ENCODE measurements at regions of chr15 and their contacts with region 1.

Region 1: GRCh38 chr15:73927476-73928240 is 1.4 kb downstream of the LOXL1 start:
- DNase-seq: peak; percentile 61 to 84 (median 75)
- H3K4me3 ChIP-seq: peak overlapping the region; percentile 49
- H3K4me3 Mint-ChIP-seq: peak overlapping the region; percentile 75 to 93 (median 81)
- H3K27ac ChIP-seq: no peak overlapping the region
- H3K27ac Mint-ChIP-seq: peak overlapping the region; percentile 22 to 92 (median 51)
- H3K4me1 ChIP-seq: peaks cover 21% of the 10 kb centered on the region
- H3K4me1 Mint-ChIP-seq: peaks cover 32 to 52% (median 43%) of the 10 kb centered on the region in 3 donors
- H3K27me3 ChIP-seq: no peaks in the 10 kb centered on the region
- H3K27me3 Mint-ChIP-seq: no peaks in the 10 kb centered on the region

Region 2: GRCh38 chr15:73915079-73915478 is 12.6 kb before region 1 on chr15:
- CTCF ChIA-PET with region 1: interaction called, 11 read pairs
- POLR2A ChIA-PET with region 1: no interaction called
- DNase-seq: no peak
- H3K4me3 ChIP-seq: no peak overlapping the region
- H3K4me3 Mint-ChIP-seq: no peak overlapping the region
- H3K27ac ChIP-seq: no peak overlapping the region
- H3K27ac Mint-ChIP-seq: no peak overlapping the region
- H3K4me1 ChIP-seq: peaks cover 7% of the 10 kb centered on the region
- H3K4me1 Mint-ChIP-seq: peaks cover 13 to 23% (median 20%) of the 10 kb centered on the region in 3 donors
- H3K27me3 ChIP-seq: no peaks in the 10 kb centered on the region
- H3K27me3 Mint-ChIP-seq: no peaks in the 10 kb centered on the region

Region 3: GRCh38 chr15:73988075-73988969 is 60.7 kb after region 1 on chr15:
- CTCF ChIA-PET with region 1: no interaction called
- POLR2A ChIA-PET with region 1: no interaction called
- DNase-seq: no peak
- H3K4me3 ChIP-seq: no peak overlapping the region
- H3K4me3 Mint-ChIP-seq: peak overlapping the region in 1 of 7 donors; percentile 18
- H3K27ac ChIP-seq: no peak overlapping the region
- H3K27ac Mint-ChIP-seq: peak overlapping the region in 1 of 8 donors; percentile 65
- H3K4me1 ChIP-seq: peaks cover 20% of the 10 kb centered on the region
- H3K4me1 Mint-ChIP-seq: peaks cover 10 to 20% (median 15%) of the 10 kb centered on the region in 3 donors
- H3K27me3 ChIP-seq: no peaks in the 10 kb centered on the region
- H3K27me3 Mint-ChIP-seq: no peaks in the 10 kb centered on the region

Region 4: DNA sequence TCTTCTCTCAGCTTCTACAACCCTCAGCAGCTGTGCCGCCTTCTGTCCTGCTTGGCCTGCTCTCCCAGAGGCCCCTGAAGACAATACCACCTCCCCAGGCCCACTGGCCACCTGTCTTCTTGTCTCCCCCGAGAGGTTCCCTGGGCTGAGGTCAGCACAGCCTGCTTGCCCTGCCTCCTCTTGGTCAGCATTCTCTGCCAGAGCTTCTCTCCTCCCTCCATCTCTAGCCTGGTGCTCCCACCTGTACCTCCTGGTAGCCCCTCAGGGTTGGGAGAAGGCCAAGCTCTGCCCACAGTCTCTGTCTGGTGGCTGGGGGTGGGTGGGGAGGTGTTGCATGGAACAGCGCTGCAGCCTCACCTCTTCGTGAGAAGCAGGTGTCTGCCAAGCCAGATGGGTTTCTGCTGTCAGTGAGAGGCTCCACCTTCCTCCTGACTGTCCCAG is 240.3 kb after region 1 on chr15:
- CTCF ChIA-PET with region 1: no interaction called
- POLR2A ChIA-PET with region 1: no interaction called
- DNase-seq: no peak
- H3K4me3 ChIP-seq: no peak overlapping the region
- H3K4me3 Mint-ChIP-seq: no peak overlapping the region
- H3K27ac ChIP-seq: no peak overlapping the region
- H3K27ac Mint-ChIP-seq: no peak overlapping the region
- H3K4me1 ChIP-seq: no peaks in the 10 kb centered on the region
- H3K4me1 Mint-ChIP-seq: no peaks in the 10 kb centered on the region
- H3K27me3 ChIP-seq: no peaks in the 10 kb centered on the region
- H3K27me3 Mint-ChIP-seq: peaks cover 13 to 28% of the 10 kb centered on the region in 2 donors

Measured in CD8-positive, alpha-beta memory T cell (primary cell).